PC-9 (cell line): ENCODE measurements at regions of chr17 and their contacts with region 1.

Region 1: DNA sequence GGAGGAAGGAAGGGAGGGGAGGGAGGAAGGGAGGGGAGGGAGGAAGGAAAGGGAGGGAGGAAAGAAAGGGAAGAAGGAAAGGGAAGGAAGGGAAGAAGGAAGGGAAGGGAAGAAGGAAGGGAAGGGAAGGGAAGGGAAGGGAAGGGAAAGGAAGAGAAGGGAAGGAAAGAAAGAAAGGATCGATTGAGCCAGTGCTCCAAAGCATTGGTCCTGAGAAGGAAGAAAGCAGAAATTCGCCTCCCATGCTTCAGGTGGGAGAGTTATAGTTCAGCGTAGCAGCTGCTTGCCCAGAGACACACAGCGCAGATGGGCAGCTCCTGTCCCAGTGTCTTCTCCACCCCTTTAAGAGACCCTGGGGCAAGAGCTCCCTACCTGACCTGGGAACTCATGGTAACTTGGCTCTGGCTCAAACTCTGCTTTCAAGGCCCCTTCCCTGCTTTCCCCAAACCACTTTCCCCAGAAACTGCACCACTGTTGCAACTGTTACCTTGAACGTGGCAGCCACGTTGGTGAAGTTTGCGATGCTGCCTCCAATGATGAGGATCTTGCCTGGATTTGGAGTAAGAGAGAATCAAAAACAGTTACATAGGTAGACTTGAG is 14.4 kb downstream of the ACLY start:
- DNase-seq: no peak
- H3K4me3 ChIP-seq: no peak overlapping the region
- H3K27ac ChIP-seq: no peak overlapping the region
- H3K4me1 ChIP-seq: no peaks in the 10 kb centered on the region
- H3K27me3 ChIP-seq: no peaks in the 10 kb centered on the region
- CTCF ChIP-seq: no peak

Region 2: DNA sequence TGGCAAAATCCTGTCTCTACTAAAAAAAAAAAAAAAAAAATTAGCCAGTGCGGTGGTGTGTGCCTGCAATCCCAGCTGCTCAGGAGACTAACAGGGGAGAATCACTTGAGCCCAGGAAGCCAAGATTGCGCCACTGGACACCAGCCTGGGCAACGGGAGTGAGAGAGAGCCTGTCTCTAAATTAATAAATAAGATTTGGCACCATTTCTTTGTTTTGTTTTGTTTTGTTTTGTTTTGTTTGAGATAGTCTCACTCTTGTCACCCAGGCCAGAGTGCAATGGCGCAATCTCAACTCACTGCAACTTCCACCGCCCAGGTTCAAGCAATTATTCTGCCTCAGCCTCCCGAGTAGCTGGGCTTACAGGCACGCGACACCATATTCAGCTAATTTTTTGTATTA is 201.6 kb before region 1 on chr17:
- CTCF ChIA-PET with region 1: no interaction called
- POLR2A ChIA-PET with region 1: interaction called, 21 read pairs
- intact Hi-C with region 1: no loop called
- DNase-seq: no peak
- H3K4me3 ChIP-seq: no peak overlapping the region
- H3K27ac ChIP-seq: no peak overlapping the region
- H3K4me1 ChIP-seq: no peaks in the 10 kb centered on the region
- H3K27me3 ChIP-seq: no peaks in the 10 kb centered on the region
- CTCF ChIP-seq: no peak